ENCODE measurements at regions of chr2 and their contacts with region 1.

Region 1: DNA sequence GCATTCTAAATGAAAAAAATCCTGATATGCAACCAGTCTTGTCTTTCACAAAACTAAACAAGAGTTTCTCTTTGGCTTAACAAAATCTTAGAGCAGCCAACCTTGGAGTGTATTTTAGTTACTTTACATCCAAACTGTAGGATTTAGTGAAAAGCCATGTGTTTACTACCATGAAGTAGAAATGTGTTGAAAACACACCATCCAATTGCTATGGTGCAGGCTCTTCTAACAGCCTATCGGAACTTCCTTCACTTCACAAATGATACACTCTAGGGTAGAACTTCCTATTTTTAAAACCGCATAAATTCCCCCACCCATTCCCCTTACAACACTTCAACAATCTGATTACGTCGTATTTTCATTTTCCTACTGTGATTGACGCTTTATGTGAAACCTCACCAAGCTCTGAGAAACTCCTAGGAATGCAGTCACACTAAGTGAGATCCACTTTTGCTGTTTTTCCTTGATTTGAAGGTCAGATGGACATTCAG is 74.4 kb upstream of the MAP4K4 start:
- H3K4me3 Mint-ChIP-seq: no peak overlapping the region
- H3K27ac Mint-ChIP-seq: peak overlapping the region; percentile 89
- H3K4me1 Mint-ChIP-seq: peaks cover 77% of the 10 kb centered on the region
- H3K27me3 Mint-ChIP-seq: peaks cover 72% of the 10 kb centered on the region

Region 2: GRCh38 chr2:101463891-101464641 is 159.0 kb before region 1 on chr2:
- intact Hi-C with region 1: loop called (anchors 10 kb)
- H3K4me3 Mint-ChIP-seq: no peak overlapping the region
- H3K27ac Mint-ChIP-seq: peak overlapping the region; percentile 32
- H3K4me1 Mint-ChIP-seq: peaks cover 37% of the 10 kb centered on the region
- H3K27me3 Mint-ChIP-seq: peaks cover 72% of the 10 kb centered on the region

Region 3: DNA sequence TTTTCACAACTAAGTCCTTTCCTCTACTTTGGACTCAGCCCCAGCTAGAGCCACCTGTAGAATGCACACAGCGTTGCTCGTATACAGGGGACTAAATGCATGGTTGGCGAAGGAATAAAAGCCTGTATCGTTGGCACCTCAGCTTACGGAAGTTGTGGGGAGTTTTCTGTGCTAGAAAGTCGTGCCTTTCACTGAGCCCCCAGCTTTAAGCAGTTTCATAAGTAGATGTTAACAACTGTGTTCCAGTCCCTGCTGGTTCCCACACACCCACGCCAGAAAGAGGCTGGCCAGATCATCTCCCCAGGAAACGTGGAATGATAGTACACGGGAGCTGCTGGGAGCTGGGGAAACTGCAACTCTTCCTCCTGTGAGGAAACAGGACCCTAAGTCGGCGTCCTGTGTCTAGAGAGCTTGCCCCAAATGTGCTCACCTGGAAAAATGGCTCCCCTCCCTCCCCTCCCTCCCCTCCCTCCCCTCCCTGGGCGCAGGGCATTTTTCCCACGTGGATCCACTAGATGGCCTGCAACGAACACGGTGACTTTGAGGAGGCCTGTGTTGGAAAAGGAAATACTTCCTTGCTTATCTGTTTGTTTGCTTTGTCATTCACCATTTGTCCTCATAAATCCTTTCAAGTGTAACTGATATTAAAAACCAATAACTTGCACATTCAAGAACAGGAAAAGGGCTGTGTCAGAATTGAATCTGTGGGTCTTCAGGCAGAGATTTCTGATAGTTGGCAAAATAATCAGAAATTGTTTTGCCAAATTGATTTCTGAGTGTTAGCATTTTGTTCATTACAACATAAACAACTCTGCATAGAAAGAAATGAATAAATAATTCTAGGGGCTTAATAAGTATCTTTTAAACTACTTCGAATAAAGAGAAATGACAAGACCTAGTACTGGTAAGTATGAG is 104.2 kb before region 1 on chr2:
- intact Hi-C with region 1: loop called (anchors 10 kb)
- H3K4me3 Mint-ChIP-seq: no peak overlapping the region
- H3K27ac Mint-ChIP-seq: no peak overlapping the region
- H3K4me1 Mint-ChIP-seq: peaks cover 44% of the 10 kb centered on the region
- H3K27me3 Mint-ChIP-seq: peaks cover 36% of the 10 kb centered on the region

Region 4: GRCh38 chr2:101697124-101698013 is 74.3 kb after region 1 on chr2 and contains the start of gene MAP4K4:
- intact Hi-C with region 1: loop called (anchors 2 kb)
- H3K4me3 Mint-ChIP-seq: peak within 1 kb of the TSS; percentile 75
- H3K27ac Mint-ChIP-seq: no peak within 1 kb of the TSS
- H3K4me1 Mint-ChIP-seq: peaks cover 36% of the 10 kb centered on the region
- H3K27me3 Mint-ChIP-seq: peaks cover 16% of the 10 kb centered on the region

Region 5: GRCh38 chr2:101725515-101726192 is 102.6 kb after region 1 on chr2:
- intact Hi-C with region 1: no loop called
- H3K4me3 Mint-ChIP-seq: no peak overlapping the region
- H3K27ac Mint-ChIP-seq: no peak overlapping the region
- H3K4me1 Mint-ChIP-seq: peaks cover 51% of the 10 kb centered on the region
- H3K27me3 Mint-ChIP-seq: no peaks in the 10 kb centered on the region

Measured in dendritic cell treated with granulocyte-macrophage colony-stimulating factor and Interleukin-4, amounts not matched to agents 40 ng/mL and 50 ng/mL, for 4 days (primary cell).